PC-9 (cell line): ENCODE measurements at regions of chr7 and their contacts with region 1.

Region 1: GRCh38 chr7:16634271-16634738 is 11.2 kb downstream of the ANKMY2 start:
- DNase-seq: no peak
- H3K4me3 ChIP-seq: no peak overlapping the region
- H3K27ac ChIP-seq: no peak overlapping the region
- H3K4me1 ChIP-seq: peaks cover 8% of the 10 kb centered on the region
- H3K27me3 ChIP-seq: no peaks in the 10 kb centered on the region
- CTCF ChIP-seq: no peak

Region 2: GRCh38 chr7:16604054-16604453 is 30.3 kb before region 1 on chr7:
- CTCF ChIA-PET with region 1: no interaction called
- POLR2A ChIA-PET with region 1: interaction called, 13 read pairs
- intact Hi-C with region 1: no loop called
- DNase-seq: no peak
- H3K4me3 ChIP-seq: no peak overlapping the region
- H3K27ac ChIP-seq: no peak overlapping the region
- H3K4me1 ChIP-seq: no peaks in the 10 kb centered on the region
- H3K27me3 ChIP-seq: no peaks in the 10 kb centered on the region
- CTCF ChIP-seq: peak; percentile 36; the same call in 1 of the 2 replicates

Region 3: GRCh38 chr7:16961641-16962040 is 327.3 kb after region 1 on chr7:
- CTCF ChIA-PET with region 1: no interaction called
- POLR2A ChIA-PET with region 1: interaction called, 12 read pairs
- intact Hi-C with region 1: no loop called
- DNase-seq: no peak
- H3K4me3 ChIP-seq: no peak overlapping the region
- H3K27ac ChIP-seq: no peak overlapping the region
- H3K4me1 ChIP-seq: no peaks in the 10 kb centered on the region
- H3K27me3 ChIP-seq: no peaks in the 10 kb centered on the region
- CTCF ChIP-seq: no peak